Esophagus muscularis mucosa (tissue), 4 donors: ENCODE measurements at regions of chr1 and their contacts with region 1.

Region 1: DNA sequence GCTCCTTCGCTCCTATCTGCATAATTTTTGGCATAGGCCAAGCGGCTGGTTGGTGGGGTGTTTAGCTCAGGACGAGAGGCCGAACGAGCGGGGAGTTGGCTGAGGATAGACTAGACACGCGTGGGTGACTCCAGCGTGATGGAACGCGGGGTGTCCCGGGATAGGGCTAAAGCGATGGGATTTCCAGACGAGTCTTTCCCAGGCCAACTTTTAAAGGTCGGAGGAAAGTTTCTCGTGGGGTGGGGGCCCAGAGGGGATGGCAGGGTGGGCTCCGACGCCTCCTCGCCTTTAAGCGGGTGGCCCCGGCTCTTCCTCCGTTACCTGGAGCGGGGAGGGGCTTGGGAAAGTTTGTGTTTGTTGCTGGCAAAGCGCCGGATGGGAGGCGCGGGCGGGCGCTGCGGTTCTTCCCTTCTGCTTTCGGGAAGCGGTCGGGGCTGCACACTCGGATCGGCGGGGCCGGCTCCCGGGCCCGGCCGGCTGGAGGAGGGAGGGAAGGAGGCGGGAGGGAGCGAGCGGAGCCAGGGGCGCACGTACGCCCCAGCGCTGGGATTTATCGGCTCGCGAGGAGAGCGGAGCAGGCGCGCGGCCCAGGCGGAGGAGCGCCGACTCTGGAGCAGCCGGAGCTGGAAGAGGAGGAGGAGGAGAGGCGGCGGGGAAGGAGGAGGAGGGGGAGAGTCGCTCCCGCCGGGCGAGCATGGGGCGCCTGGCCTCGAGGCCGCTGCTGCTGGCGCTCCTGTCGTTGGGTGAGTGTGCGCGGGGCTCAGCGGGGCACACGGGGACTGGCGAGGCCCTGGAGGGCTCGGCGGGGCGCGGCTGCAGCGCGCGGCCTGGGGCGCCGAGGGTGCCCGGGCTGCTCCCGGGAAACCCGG is at the start of gene PTGFRN:
- DNase-seq: no peak
- H3K4me3 ChIP-seq: peak within 1 kb of the TSS; percentile 78 to 90 (median 83)
- H3K27ac ChIP-seq: peak within 1 kb of the TSS; percentile 94 to 96 (median 96)
- H3K4me1 ChIP-seq: peaks cover 10 to 59% (median 52%) of the 10 kb centered on the region in 4 donors
- H3K27me3 ChIP-seq: no peaks in the 10 kb centered on the region
- CTCF ChIP-seq: no peak
- EP300 ChIP-seq: no peak
- POLR2A ChIP-seq: peak; percentile 23
- total RNA-seq, gene PTGFRN: 69.1 to 150 (median 106) TPM

Region 2: DNA sequence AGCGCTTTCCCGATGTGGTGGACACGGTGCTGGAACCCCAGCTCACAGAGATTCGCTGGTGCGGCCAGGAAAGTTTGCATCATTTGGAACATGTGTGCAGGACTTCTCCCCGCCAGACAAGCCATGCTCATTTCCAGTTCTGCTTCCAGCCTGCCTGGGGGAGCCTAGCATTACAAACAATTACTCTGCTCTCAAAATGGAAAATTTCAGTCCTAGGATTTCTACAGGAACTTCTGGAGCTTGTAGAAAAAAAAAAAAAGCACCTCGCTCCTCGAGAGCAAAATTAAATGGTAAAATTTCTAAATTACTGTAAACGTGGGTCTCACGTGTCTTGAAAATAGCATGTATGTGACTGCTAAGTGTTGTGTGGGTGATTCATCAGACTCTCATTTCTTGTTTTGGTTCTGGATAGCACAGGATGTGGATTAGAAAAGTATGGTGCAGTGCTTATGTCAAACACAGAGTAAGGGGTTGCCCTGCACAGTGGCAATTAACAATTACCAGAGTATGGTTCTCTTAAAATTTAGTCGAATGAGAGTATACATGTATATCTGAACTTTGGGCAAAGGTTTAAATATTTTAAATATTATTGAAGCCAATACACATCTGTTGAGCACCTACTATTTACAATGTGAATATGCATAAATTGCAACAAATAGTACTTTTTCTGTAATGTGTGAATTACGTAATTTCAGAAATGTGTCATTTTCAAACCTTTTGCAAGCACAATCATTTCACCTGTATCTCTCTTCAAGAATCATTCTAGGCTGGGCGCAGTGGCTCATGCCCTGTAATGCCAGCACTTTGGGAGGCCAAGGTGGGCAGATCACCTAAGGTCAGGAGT is 61.8 kb before region 1 on chr1:
- intact Hi-C with region 1: no loop called
- DNase-seq: no peak
- H3K4me3 ChIP-seq: no peak overlapping the region
- H3K27ac ChIP-seq: peak overlapping the region in 2 of 4 donors; percentile 29 to 37
- H3K4me1 ChIP-seq: no peaks in the 10 kb centered on the region
- H3K27me3 ChIP-seq: no peaks in the 10 kb centered on the region
- CTCF ChIP-seq: no peak
- EP300 ChIP-seq: no peak
- POLR2A ChIP-seq: no peak

Region 3: DNA sequence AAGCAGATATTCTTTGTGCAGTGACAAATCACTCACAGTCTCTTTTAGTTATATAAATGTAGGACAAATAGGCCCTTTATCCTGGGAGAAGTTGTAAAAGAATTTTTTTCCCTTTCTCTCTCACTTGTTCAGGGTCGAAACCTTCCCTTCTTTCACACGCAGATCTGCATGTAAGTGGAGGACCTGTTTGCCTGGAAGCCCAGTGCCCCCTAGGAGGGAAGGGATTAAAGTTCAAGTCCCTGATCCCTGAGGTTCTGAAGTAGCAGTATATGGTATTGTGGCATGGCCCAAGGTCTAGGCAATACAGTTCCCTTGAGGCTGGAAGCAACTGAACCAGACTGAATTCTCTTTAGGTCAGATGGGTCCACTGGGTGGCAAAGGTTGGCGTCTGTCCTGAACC is 48.6 kb before region 1 on chr1:
- intact Hi-C with region 1: no loop called
- DNase-seq: no peak
- H3K4me3 ChIP-seq: no peak overlapping the region
- H3K27ac ChIP-seq: no peak overlapping the region
- H3K4me1 ChIP-seq: peaks cover 0 to 4% (median 3%) of the 10 kb centered on the region in 4 donors
- H3K27me3 ChIP-seq: no peaks in the 10 kb centered on the region
- CTCF ChIP-seq: no peak
- EP300 ChIP-seq: no peak
- POLR2A ChIP-seq: no peak

Region 4: GRCh38 chr1:116919802-116920201 is 10.1 kb after region 1 on chr1:
- intact Hi-C with region 1: no loop called
- DNase-seq: no peak
- H3K4me3 ChIP-seq: no peak overlapping the region
- H3K27ac ChIP-seq: no peak overlapping the region
- H3K4me1 ChIP-seq: peaks cover 37 to 90% (median 63%) of the 10 kb centered on the region in 4 donors
- H3K27me3 ChIP-seq: no peaks in the 10 kb centered on the region
- CTCF ChIP-seq: no peak
- EP300 ChIP-seq: no peak
- POLR2A ChIP-seq: no peak

Region 5: DNA sequence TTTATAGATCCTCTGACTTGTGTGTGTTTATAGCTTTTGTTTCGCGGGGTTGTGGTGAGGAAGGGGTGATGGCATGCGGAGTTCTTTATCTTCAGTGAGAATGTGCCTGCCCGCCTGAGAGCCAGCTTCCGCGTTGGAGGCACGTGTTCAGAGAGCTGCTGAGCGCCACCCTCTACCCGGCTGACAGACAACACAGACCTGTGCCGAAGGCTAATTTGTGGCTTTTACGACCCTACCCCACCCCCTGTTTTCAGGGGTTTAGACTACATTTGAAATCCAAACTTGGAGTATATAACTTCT is 77.5 kb after region 1 on chr1:
- intact Hi-C with region 1: loop called (anchors 10 kb)
- DNase-seq: no peak
- H3K4me3 ChIP-seq: no peak overlapping the region
- H3K27ac ChIP-seq: no peak overlapping the region
- H3K4me1 ChIP-seq: peaks cover 32 to 72% (median 63%) of the 10 kb centered on the region in 4 donors
- H3K27me3 ChIP-seq: no peaks in the 10 kb centered on the region
- CTCF ChIP-seq: no peak
- EP300 ChIP-seq: no peak
- POLR2A ChIP-seq: no peak